Motor neuron (in vitro differentiated cells): ENCODE measurements at regions of chr15 and their contacts with region 1.

Region 1: GRCh38 chr15:74382004-74382816 is 14.8 kb upstream of the CYP11A1 start:
- ATAC-seq: peak; percentile 59 to 97 (median 90)
- H3K4me3 ChIP-seq: no peak overlapping the region
- H3K27ac ChIP-seq: no peak overlapping the region
- H3K4me1 ChIP-seq: peaks cover 15 to 17% of the 10 kb centered on the region in 2 donors

Region 2: DNA sequence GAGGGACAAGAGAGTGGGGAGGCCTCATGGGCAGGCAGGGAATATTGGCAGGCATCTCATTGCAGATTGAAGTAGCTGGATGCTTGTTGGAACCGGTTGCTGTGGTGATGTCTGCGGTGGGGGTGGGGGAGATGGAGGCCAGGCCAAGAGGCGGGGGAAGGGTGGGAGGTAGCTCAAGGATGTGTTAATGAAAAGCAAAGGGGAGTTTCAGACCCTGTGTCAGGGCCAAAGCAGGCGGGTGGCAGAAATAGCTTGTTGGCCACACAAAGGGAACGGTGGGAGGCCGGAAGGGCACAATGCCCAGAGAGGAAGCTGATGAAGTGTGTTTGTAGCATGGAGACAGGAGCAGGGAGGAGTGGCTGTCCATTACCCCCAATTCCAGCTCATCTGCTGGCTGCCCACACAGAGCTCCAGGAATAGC is 118.1 kb before region 1 on chr15:
- in situ Hi-C with region 1: no loop called
- ATAC-seq: peak in 5 of 8 experiments; percentile 57 to 69 (median 63)
- H3K4me3 ChIP-seq: no peak overlapping the region
- H3K27ac ChIP-seq: peak overlapping the region; percentile 77 to 82
- H3K4me1 ChIP-seq: peaks cover 85 to 93% of the 10 kb centered on the region in 2 donors

Region 3: GRCh38 chr15:74433592-74434262 is 51.5 kb after region 1 on chr15 and contains the start of gene SEMA7A:
- in situ Hi-C with region 1: loop called in 5 of 9 experiments (anchors 5 to 10 kb)
- ATAC-seq: peak; percentile 86 to 90 (median 88)
- H3K4me3 ChIP-seq: peak within 1 kb of the TSS; percentile 52 to 86 (median 63)
- H3K27ac ChIP-seq: peak within 1 kb of the TSS; percentile 58 to 76
- H3K4me1 ChIP-seq: peaks cover 9 to 29% of the 10 kb centered on the region in 2 donors
- total RNA-seq, gene SEMA7A: 0.45 to 16.5 (median 9.6) TPM

Region 4: GRCh38 chr15:74438721-74439316 is 56.6 kb after region 1 on chr15:
- in situ Hi-C with region 1: loop called in 5 of 9 experiments (anchors 5 to 10 kb)
- ATAC-seq: peak; percentile 61 to 83 (median 69)
- H3K4me3 ChIP-seq: no peak overlapping the region
- H3K27ac ChIP-seq: no peak overlapping the region
- H3K4me1 ChIP-seq: peaks cover 9 to 11% of the 10 kb centered on the region in 2 donors

Region 5: DNA sequence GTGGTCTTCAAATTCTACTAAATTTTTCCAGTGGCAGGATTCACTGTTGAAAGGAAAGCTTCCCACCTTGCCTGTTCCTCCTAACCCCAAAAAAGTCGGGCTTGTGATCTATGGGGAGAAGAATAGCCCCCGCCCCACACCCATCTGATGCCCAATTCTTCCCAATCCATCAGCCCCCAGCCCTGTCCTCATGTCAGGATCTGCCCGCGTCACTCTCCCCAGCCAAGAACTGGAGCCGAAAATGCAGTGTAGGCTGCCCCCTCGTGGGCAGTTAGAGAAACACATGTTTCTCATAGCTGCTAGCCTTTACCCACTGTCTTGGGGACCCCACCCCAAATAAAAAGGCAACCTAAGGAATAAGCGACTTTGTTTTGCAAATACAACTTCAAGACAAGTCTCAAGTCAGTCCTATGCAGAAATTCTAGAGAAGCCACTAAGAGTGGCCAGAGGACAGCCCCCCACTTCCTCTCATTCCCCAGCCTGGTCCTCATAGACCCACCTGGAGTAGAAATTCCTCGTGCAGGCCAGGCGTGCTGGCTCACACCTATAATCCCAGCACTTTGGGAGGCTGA is 386.6 kb after region 1 on chr15:
- in situ Hi-C with region 1: loop called in 4 of 9 experiments (anchors 25 kb)
- ATAC-seq: peak; percentile 20 to 61 (median 48)
- H3K4me3 ChIP-seq: no peak overlapping the region
- H3K27ac ChIP-seq: no peak overlapping the region
- H3K4me1 ChIP-seq: peaks cover 15 to 17% of the 10 kb centered on the region in 2 donors

Region 6: DNA sequence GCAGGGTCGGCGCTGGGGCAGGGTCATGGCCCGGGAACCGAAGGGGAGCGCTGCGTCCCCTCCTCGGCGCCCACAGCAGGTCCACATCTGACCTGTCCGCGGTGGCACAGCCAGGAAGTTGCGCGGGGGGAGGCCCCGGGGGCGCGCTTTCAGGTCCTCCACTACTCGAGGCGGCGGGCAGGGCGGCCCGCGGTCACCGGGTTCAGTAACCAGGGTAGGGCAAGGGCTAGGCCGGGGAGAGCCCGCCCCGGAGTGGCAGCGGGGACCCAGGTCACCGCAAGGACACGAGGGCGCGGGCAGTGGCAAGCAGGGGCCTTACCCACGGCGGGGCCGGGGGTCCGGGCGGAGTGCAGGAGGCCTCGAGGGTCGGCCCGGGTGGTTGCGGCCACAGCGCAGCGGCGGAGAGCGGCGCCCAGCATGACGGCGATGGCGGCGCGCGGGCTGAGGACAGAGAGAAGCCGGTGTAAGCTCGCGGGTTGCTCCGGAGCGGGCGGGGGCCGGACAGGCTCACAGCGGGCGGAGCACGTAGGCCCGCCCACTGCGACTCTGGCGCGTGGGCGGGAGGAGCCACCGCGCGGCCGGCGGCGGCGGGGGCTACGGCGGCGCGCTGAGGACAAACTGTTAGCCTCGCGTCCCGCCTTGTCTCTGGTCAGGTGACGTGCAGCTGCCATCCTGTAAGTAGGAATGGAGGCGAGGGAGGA is 555.5 kb after region 1 on chr15 and contains the start of gene COX5A:
- in situ Hi-C with region 1: loop called in 1 of 9 experiments (anchors 25 kb)
- ATAC-seq: peak; percentile 96 to 98 (median 97)
- H3K4me3 ChIP-seq: peak within 1 kb of the TSS; percentile 58 to 93 (median 83)
- H3K27ac ChIP-seq: peak within 1 kb of the TSS; percentile 87 to 91
- H3K4me1 ChIP-seq: peaks cover 13 to 16% of the 10 kb centered on the region in 2 donors
- total RNA-seq, gene COX5A: 108 to 262 (median 203) TPM